GM12878 (cell line): ENCODE measurements at regions of chr10 and their contacts with region 1.

Region 1: DNA sequence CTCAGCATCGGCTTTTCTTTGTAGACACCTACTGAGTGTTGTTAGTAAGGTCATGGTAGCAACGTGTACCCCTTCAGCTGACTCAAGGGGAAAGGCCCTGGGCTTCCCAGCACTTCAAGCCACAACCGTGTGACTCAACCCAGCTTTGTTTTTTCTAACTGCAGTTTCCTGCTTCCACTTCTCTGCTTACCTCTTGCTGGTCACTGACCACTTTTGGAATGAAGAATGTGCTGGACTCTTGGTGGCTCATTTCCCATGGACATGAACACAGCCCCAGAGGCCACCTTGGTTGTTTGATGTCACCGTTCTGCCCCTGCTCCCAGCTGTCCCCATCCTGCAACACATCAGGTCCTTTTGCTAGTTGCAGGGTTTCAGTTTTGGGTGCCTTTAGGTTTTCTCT is 69.5 kb upstream of the ZNF438 start:
- DNase-seq: peak; percentile 59
- ATAC-seq: peak; percentile 91
- H3K4me3 ChIP-seq: no peak overlapping the region
- H3K27ac ChIP-seq: no peak overlapping the region; the same call in 1 of the 2 replicates
- H3K4me1 ChIP-seq: peaks cover 14% of the 10 kb centered on the region
- H3K27me3 ChIP-seq: no peaks in the 10 kb centered on the region
- CTCF ChIP-seq: no peak
- EP300 ChIP-seq: peak; percentile 52 to 80; a peak in 3 of 4 replicates
- POLR2A ChIP-seq: no peak
- RAD21 ChIP-seq: no peak

Region 2: DNA sequence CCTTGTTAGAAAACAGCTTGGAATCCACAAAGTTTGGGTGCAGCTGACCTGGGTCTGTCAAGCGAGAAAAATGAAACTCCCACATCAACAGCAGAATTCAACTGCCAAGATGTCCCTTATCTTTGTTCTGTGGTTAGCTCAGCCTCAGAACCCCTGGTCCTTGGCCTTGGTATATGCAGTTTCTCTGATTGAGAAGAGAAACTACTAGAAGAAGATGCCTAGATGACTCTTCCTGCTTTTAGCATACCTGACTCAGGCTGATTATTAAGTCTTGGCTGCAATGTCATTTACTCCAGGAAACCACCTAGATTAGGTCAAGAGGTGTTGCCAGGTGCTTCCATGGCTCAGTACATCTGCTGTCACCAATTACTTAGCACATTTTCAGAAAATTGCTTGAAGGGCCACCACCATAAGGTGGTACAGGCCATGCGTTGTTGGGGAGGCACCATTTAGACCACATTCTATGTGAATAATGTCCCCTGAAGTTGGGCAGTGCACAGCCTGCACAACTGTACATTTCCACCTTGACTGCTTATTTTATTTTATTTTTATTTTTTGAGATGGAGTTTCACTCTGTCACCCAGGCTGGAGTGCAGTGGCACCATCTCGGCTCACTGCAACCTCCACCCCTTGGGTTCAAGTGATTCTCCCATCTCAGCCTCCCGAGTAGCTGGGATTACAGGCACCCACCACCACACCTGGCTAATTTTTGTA is 10.1 kb before region 1 on chr10:
- CTCF ChIA-PET with region 1: interaction called, 8 read pairs
- POLR2A ChIA-PET with region 1: interaction called, 7 read pairs
- RAD21 ChIA-PET with region 1: interaction called, 10 read pairs
- SMC1A ChIA-PET with region 1: interaction called, 41 read pairs
- in situ Hi-C with region 1: no loop called
- intact Hi-C with region 1: no loop called
- DNase-seq: peak; percentile 84
- ATAC-seq: peak; percentile 96
- H3K4me3 ChIP-seq: no peak overlapping the region
- H3K27ac ChIP-seq: no peak overlapping the region
- H3K4me1 ChIP-seq: peaks cover 4% of the 10 kb centered on the region; the same call in 1 of the 2 replicates
- H3K27me3 ChIP-seq: no peaks in the 10 kb centered on the region
- CTCF ChIP-seq: no peak
- EP300 ChIP-seq: peak in 1 of 2 experiments; percentile 75; a peak in 1 of 4 replicates
- POLR2A ChIP-seq: no peak
- RAD21 ChIP-seq: peak; percentile 26; the same call in 1 of the 2 replicates

Region 3: DNA sequence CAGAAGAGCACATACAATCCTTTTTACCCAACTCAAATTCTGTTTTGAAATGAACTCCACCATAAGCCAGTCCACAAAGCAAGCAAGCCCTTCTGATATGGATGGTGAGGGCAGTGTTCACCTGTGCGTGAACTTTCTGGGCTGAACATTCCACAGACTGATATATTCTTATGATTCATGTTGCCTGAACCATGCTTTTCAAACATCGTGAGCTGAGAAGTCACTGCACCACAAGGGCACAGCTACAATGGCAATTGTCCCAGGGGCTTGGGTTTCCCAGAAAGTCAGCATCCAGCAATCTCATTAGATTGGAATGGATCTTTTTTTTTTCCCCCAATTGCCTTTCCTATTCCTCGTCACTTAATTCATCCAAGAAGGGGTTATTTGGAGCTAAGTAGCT is 17.4 kb after region 1 on chr10:
- CTCF ChIA-PET with region 1: interaction called, 3 read pairs
- POLR2A ChIA-PET with region 1: interaction called, 3 read pairs
- RAD21 ChIA-PET with region 1: interaction called, 3 read pairs
- SMC1A ChIA-PET with region 1: interaction called, 11 read pairs
- in situ Hi-C with region 1: no loop called
- intact Hi-C with region 1: no loop called
- DNase-seq: no peak
- ATAC-seq: no peak
- H3K4me3 ChIP-seq: no peak overlapping the region
- H3K27ac ChIP-seq: no peak overlapping the region
- H3K4me1 ChIP-seq: no peaks in the 10 kb centered on the region
- H3K27me3 ChIP-seq: no peaks in the 10 kb centered on the region
- CTCF ChIP-seq: no peak
- EP300 ChIP-seq: no peak
- POLR2A ChIP-seq: no peak
- RAD21 ChIP-seq: no peak

Region 4: DNA sequence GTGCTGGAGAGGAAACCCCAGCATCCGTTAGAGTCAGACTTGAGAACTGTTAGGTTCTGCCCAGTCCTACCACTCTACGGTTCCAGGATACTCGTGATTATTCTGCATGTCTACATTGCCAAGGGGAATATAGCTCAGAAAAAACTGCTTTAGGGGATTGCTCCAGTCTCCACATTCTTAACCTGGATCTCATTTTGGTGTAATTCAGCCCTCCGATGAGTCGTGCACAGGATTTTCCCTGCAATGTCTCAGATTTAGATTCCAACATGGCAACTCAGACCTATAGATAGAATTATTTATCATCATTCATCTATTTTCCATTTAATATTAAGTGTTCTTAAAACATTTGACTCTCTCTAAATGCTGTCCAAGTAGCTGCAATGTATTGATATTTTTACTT is 96.8 kb after region 1 on chr10:
- CTCF ChIA-PET with region 1: no interaction called
- POLR2A ChIA-PET with region 1: no interaction called
- RAD21 ChIA-PET with region 1: no interaction called
- SMC1A ChIA-PET with region 1: no interaction called
- in situ Hi-C with region 1: no loop called
- intact Hi-C with region 1: no loop called
- DNase-seq: no peak
- ATAC-seq: no peak
- H3K4me3 ChIP-seq: no peak overlapping the region
- H3K27ac ChIP-seq: no peak overlapping the region
- H3K4me1 ChIP-seq: no peaks in the 10 kb centered on the region
- H3K27me3 ChIP-seq: no peaks in the 10 kb centered on the region
- CTCF ChIP-seq: no peak
- EP300 ChIP-seq: no peak
- POLR2A ChIP-seq: no peak
- RAD21 ChIP-seq: no peak